ENCODE measurements at regions of chr20 and their contacts with region 1.

Region 1: DNA sequence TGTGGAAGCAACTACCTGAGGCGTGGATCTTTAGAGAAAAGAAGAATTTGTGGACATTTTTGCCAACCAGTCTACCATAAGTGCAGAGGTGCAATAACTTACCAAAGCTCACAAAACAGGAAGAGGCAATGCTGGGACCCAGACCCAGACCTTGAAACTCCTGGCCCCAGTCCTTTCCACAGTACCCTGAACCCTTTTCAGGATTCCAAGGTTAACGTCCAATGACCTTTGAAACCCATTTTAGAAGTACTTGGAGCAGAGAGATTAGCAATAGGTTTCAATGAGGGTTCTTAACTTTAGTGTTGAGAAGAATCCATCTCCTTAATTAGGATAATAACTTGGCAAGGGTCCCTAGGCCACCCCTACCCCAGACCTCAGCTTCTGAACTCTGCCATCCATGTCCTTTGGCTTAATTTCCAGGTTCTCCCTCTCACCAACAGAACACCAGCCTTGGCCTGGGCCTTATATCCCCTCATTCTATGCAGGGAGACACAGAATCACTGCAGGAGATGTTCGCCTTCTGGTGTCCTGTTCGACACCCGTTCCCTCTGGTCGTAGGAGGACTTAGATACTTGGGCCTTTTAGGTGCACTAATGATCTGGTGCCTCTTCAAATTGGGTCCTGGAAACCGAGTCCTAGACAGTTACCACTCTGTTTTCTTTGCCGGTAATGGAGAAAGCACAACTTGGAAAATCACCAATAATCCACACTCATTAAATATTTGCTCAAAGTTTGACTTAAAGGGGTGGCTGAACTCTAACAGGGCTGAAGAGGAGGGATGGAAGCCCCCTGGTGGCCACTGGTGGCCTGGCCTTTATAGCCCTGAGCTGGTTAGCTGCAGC is 40.6 kb downstream of the ISM1 start:
- DNase-seq: peak; percentile 52
- CTCF ChIP-seq: peak; percentile 63

Region 2: DNA sequence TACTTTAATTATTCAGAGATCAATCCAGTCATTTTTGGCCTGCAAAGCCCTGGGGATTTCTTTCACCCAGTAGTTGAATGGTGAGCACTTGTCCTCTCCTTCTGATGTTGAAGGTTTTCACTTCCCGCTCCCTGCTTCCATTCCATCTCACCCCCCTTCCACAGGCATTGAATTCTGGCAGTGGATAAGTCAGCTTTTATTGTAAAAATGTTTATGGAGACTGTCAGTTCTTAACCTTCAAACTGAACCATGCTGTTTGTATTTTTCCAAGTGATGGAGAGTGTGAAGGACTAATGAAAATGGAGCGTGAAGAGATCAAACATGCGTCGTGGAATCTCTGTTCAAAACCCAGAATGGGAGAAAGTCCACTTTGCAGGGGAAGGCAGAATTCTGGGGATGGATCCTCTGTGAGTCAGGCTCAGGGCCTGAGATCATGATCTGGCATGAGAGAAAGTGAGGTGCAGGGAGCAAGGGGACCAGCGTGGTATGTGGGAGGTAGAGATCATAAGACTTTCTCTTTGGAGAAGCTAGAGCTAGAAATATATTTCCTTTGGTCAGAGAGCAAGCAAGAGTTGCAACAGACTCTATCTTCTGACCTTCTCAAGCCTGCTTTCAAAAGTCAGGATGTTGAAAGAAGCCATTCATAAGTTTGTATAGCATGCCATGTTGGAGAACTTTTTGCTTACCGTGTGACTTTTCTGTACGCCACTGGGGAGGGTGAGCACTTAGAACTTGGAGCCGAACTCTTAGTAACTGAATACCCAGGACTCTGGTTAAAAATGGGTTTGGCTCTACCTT is 10.4 kb before region 1 on chr20:
- CTCF ChIA-PET with region 1: interaction called, 10 read pairs
- POLR2A ChIA-PET with region 1: no interaction called
- DNase-seq: no peak
- CTCF ChIP-seq: no peak